Left colon (tissue), 2 donors: ENCODE measurements at regions of chr6 and their contacts with region 1.

Region 1: DNA sequence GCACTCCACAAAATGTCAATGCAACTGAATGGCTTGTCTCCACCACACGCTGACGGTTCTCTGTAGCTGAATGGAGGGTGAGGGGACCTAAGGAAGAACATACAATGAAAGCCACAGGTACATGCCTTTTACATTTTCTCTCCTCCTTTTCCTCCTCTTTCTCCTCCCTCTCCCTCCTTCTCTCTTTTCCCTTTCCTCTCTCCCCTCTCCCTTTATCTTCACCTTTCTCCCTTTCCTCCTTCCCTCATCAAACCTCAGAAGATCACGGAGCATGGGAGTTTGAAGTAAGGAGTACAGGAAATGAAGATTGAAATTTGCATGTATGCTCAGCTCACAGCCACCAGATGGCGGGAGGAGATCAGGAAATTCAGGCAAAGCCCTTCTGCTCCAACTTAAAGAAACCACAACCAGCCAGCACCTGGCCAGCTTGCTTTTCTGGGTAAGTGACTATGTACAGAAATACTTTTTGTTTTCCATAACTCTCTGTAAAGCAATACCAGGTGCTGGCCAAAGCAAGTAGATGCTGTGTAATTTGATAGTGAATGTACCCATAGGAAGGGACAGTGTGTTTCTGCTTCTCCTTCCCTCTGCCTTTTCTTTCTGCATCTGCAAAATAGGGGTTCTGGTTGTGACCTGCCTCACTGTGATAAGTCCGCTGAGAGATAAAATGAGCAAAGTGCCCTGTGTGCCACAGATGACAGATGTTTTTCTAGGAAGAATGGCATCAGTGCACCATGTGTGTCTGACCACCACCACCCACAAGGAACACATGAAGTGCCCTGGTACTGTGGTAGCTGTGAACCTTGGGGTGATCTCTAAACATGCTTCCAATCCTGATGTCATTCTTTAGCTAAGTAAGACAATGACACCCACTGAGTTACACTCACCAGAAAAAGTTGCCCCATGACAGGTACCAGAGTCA is 18.6 kb upstream of the FOXO3 start:
- DNase-seq: peak; percentile 67 to 71
- ATAC-seq: peak; percentile 96

Region 2: DNA sequence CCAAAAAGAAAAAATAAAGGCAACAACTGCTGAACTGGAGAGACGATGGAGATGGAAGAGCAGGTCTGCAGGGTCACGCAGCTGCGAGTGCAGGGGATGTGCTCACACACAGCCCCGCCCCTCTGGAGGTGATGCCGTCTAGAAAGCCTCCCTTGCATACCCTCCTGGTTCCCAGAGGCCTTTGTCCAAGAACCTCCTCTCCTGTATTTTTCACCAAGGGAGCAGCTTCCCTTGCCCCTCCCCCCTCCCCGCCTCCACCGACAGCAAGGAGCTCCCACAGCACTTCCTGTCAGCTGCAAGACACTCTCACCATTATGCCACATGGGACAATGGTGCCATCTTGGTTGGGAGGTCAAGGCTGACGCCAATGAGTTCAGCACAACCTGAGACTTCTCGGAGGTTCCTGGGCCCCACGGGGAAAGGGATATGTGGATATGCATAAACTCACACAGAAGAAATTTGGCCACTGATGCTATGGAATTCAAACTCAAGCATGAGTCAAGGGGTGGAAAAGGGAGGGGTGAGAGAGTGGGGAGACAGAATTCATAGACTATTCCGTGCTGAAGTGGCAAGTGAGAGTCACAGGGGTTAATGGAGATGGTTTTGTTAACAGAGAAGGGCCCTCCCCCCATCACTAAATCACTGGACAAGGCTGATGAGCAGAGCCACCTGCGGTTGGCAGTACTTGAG is 850.9 kb before region 1 on chr6:
- intact Hi-C with region 1: no loop called
- DNase-seq: no peak
- ATAC-seq: no peak

Region 3: DNA sequence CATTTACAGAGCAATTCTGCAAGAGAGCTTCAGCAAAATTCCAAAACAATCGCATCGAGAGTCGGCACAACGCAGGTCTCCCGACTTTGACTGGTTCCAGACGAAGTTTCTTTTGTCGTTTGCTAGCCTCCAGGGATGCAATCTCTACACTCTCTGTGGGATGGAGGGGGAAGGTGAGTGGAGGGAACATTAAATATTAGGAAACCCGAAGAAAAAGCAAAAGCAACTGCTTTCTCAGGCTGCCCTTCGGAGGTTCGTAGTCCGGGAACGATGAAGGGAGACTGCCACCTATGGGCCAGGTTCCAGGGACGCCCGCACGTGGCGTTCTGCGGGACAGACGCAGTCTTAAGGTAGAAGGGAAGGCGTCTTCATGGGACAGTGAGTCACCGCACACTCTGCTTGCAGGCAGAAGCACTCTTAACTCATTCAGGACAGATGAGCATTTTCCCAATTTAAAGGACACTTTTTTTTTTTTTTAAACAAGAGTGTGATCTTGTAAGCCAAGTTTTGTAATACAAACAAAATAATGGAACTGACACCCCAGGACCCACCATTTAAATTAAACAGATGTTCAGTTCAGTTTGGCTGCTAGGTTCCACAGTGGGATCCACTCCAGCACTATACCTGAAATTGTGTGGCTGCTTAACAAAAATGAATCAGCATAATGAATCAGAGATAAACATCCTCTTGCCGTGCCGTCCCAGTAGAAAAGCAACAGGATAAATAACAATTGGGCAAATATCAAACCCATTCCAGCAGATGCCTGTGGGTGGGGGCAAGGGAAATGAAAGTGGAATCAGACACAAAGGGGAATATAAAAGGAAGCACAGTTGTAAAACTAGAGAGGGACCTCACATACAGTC is 240.3 kb after region 1 on chr6:
- intact Hi-C with region 1: loop called in 1 of 2 experiments (anchors 10 kb)
- DNase-seq: peak; percentile 87 to 90
- ATAC-seq: peak; percentile 100

Region 4: GRCh38 chr6:108835218-108835850 is 293.2 kb after region 1 on chr6:
- intact Hi-C with region 1: loop called (anchors 2 to 10 kb)
- DNase-seq: peak; percentile 83 to 93
- ATAC-seq: peak; percentile 99

Region 5: DNA sequence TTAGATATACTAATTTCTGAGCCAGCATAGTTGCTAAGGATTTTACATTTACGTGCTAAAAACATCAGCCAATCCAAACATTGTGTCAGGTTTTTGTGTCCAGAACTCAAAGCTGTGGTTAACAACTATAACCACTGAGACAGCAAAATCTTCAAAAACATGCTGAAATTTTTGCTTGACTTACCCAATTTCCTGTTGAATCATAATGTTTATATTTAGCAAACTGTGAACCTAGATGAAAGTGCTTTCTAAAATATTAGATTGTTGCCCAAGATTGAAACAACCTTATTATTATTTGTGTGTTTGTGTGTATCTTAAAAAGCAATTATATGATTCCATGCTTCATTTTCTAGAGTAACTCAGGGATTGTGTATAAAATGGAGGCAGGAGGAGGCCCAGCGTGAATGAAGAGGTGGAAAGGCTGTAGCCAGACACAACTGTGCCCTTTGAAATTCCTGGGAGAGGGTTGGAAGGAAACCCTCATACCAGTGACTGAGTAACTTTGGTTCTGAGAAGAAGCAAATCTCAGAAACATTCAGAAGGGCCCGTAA is 354.1 kb after region 1 on chr6:
- intact Hi-C with region 1: loop called in 1 of 2 experiments (anchors 5 kb)
- DNase-seq: no peak
- ATAC-seq: peak; percentile 18

Region 6: GRCh38 chr6:109073344-109074132 is 531.4 kb after region 1 on chr6:
- intact Hi-C with region 1: loop called in 1 of 2 experiments (anchors 5 kb)
- DNase-seq: no peak
- ATAC-seq: peak; percentile 63